ENCODE measurements at regions of chr9 and their contacts with region 1.

Region 1: GRCh38 chr9:101311758-101312420 is 72.9 kb downstream of the BAAT start:
- DNase-seq: peak; percentile 36

Region 2: DNA sequence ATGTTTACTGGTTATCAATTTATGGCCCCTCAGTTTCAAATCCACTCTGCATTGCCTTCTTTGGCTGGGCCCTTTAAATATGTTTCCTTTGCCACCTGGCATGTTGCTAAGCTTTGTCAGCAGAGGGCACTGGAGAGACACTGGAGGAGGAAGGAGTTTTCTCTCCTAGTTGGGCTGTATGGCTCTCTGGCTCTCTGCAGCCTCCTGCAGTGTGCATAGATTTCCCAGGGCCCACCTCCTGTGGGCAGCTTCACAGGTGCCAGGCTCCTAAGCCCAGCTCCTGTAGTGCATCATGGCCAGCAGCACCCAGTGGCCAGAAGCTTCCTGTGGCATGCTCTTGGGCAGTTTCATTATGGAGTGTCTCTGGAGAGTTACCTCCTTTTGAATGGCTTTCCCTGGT is 710.7 kb before region 1 on chr9:
- CTCF ChIA-PET with region 1: interaction called, 19 read pairs
- POLR2A ChIA-PET with region 1: no interaction called
- DNase-seq: peak; percentile 64

Region 3: DNA sequence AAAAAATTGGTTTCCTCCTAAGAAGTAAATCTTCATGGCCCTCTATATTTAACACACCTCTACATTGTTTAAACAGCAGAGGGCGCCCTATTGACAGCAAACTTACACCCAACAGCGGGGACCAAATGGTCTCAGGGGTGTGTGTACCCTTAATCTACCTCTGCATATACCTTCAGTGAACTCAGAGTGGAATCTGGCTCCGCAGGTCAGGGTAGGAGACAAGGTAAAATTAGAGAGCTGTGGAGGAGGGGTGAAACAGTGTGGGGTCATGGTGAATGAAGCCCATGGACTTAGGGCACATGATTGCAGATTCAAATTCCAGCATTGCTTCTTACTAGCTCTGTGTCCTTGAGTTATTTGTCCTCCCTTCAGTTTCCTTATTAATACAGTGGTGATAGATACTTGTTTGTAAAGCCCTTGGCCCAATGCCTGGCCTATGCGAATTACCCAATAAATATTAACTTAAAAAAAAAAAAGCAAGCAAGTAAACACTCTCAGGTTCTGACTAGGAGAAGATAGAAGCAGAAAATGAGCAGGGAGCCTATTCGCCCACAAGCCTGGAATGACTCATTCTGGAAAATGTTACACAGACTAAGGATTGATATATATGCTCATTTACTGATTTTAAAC is 611.1 kb before region 1 on chr9:
- CTCF ChIA-PET with region 1: interaction called, 10 read pairs
- POLR2A ChIA-PET with region 1: no interaction called
- DNase-seq: no peak

Region 4: DNA sequence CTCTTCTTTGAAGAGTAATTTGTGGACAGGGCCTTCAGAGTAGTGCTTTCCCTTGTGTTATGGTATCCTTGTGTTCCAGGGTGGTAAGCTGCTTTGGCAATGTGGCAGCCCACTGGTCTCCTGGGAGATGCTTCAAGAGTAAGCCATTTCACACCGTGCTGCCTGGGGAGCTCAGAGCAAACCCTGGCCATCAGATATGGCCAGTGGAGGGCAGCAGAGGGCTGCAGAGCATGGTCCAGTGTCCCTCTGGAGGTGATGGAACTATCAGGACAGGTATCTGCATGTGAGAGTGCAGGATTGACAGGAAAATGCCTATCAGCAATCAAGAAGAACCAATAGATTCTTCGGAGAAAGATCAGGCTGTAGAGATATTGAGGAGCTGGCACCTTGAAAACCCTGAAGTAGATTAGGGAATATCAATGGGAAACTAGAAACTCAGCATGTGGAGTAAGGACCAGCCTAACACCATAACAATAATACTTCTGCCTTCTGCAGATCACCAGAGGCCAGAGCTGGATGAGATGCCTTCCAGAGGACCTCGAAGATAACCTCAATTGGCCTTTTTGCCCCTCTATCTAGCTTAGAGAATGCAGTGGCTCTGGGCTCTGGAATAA is 192.6 kb before region 1 on chr9:
- CTCF ChIA-PET with region 1: interaction called, 11 read pairs
- POLR2A ChIA-PET with region 1: no interaction called
- DNase-seq: peak; percentile 55

Region 5: GRCh38 chr9:101354143-101354764 is 42.4 kb after region 1 on chr9:
- CTCF ChIA-PET with region 1: no interaction called
- POLR2A ChIA-PET with region 1: no interaction called
- DNase-seq: no peak

Region 6: DNA sequence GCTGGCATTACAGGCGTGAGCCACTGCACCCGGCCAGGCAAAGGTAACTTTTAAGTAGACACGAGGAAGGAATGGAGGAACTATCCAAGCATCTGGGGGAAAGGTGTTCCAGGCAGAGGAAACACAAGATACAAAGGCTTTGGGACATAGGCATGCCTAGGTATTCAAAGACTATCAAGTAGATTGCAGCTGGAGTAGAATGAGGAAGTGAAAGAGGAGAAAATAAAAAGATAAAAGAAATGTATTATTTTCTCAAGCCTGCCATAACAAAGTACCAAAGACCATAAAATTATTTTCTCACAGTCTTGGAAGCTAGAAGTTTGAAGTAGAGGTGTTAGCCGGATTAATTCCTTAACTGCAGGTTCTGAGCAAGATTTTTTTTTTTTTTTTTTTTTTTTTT is 466.4 kb after region 1 on chr9:
- CTCF ChIA-PET with region 1: no interaction called
- POLR2A ChIA-PET with region 1: no interaction called
- DNase-seq: no peak

Measured in HEK293T (cell line).